ENCODE measurements at regions of chr18 and their contacts with region 1.

Region 1: GRCh38 chr18:2655178-2655953 is at the start of gene SMCHD1:
- DNase-seq: peak; percentile 67 to 96 (median 87)
- ATAC-seq: peak; percentile 70
- H3K4me3 ChIP-seq: peak within 1 kb of the TSS; percentile 96 to 97
- H3K4me3 Mint-ChIP-seq: peak within 1 kb of the TSS; percentile 88
- H3K27ac ChIP-seq: peak within 1 kb of the TSS; percentile 97 to 100
- H3K27ac Mint-ChIP-seq: peak within 1 kb of the TSS; percentile 98
- H3K4me1 ChIP-seq: peaks cover 29% of the 10 kb centered on the region
- H3K4me1 Mint-ChIP-seq: peaks cover 48% of the 10 kb centered on the region
- H3K27me3 ChIP-seq: no peaks in the 10 kb centered on the region
- H3K27me3 Mint-ChIP-seq: no peaks in the 10 kb centered on the region
- CTCF ChIP-seq: no peak
- total RNA-seq, gene SMCHD1: 305 to 306 TPM

Region 2: DNA sequence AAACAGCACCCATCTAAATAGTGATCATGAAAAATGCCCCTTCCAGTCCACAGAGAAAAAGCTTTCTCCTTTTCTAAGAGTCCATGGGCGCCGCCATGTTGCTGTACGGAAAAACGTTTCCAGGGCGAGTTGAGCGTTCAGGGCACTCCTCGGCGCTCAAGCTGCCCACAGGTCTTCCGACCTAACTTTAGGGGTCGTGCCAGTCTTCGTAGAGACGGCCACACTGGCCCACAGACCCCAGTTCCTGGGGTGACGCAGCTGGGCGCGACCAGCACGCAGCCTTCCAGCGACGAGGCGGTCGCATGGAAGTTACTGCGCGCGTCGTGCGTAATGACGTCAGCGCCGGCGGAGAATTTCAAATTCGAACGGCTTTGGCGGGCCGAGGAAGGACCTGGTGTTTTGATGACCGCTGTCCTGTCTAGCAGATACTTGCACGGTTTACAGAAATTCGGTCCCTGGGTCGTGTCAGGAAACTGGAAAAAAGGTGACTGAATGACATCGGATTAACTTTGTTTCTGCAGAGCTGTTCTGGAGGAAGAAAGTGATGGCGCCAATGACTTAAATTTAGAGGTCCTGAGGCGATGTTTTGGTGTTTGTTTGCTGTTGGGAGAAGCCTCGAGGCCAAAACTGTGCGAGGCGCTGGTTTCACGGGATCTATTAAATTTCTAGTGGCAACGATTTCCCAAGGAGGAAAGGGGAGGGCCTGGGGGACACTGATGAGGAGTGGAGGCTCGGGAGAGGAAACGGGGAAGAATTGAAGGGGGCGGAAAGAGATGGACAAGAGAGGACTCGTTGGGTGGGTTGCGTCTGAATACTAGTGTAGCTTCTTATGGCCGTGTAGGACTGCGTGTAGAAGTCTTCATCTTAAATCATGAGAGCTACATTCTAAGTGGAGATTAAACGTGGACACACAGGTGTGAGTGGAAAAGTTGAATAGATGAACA is 83.9 kb before region 1 on chr18 and contains the starts of genes METTL4 and NDC80:
- CTCF ChIA-PET with region 1: interaction called, 5 read pairs
- POLR2A ChIA-PET with region 1: interaction called, 53 read pairs
- intact Hi-C with region 1: loop called (anchors 1 kb)
- DNase-seq: peak; percentile 71 to 93 (median 85)
- ATAC-seq: peak; percentile 84
- H3K4me3 ChIP-seq: peak within 1 kb of the TSS; percentile 77 to 89
- H3K4me3 Mint-ChIP-seq: peak within 1 kb of the TSS; percentile 99
- H3K27ac ChIP-seq: peak within 1 kb of the TSS; percentile 97 to 99
- H3K27ac Mint-ChIP-seq: peak within 1 kb of the TSS; percentile 100
- H3K4me1 ChIP-seq: peaks cover 27% of the 10 kb centered on the region
- H3K4me1 Mint-ChIP-seq: peaks cover 65% of the 10 kb centered on the region
- H3K27me3 ChIP-seq: no peaks in the 10 kb centered on the region
- H3K27me3 Mint-ChIP-seq: no peaks in the 10 kb centered on the region
- CTCF ChIP-seq: no peak
- total RNA-seq, gene METTL4: 4.8 to 5.4 TPM
- total RNA-seq, gene NDC80: 5.6 to 7.1 TPM

Region 3: DNA sequence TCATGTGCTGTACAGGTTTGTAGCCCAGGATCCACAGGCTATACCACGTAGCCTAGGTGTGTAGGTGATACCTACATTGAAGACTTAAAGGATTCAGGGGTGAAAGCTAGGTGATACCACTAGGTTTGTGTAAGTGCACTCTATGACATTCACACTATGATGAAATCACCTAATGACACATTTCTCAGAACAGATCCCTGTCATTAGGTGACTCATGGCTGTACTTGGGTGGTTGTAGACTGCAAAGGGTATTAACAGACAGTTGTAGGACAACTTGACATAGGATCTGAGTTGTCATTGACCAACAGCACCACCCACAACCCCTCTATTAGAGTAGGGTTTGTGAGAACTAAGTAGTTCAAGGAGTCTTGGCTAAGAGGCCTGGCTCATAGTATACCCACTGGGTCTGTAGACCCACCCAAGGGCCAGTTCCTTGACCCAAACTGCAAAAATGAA is 27.5 kb before region 1 on chr18:
- CTCF ChIA-PET with region 1: no interaction called
- POLR2A ChIA-PET with region 1: interaction called, 14 read pairs
- intact Hi-C with region 1: no loop called
- DNase-seq: no peak
- ATAC-seq: no peak
- H3K4me3 ChIP-seq: no peak overlapping the region
- H3K4me3 Mint-ChIP-seq: no peak overlapping the region
- H3K27ac ChIP-seq: no peak overlapping the region
- H3K27ac Mint-ChIP-seq: no peak overlapping the region
- H3K4me1 ChIP-seq: no peaks in the 10 kb centered on the region
- H3K4me1 Mint-ChIP-seq: peaks cover 22% of the 10 kb centered on the region
- H3K27me3 ChIP-seq: no peaks in the 10 kb centered on the region
- H3K27me3 Mint-ChIP-seq: no peaks in the 10 kb centered on the region
- CTCF ChIP-seq: no peak

Region 4: DNA sequence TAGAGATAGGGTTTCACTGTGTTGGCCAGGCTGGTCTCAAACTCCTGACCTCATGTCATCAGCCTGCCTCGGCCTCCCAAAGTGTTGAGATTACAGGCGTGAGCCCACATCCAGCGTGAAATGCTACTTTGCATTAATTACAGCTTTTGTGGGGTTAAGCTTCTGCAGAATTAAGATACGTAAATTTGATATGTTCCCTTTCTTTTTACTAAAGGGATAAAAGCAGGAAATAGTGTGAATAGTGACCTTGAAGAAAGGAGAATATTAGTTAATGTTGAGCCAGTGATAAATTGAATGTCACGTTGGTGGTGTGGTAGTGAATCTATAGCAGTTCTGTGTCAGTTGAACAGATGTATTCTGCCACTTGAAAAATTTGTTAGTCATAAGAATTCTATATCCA is 17.0 kb after region 1 on chr18:
- CTCF ChIA-PET with region 1: interaction called, 3 read pairs
- POLR2A ChIA-PET with region 1: interaction called, 14 read pairs
- intact Hi-C with region 1: loop called in 1 of 2 experiments (anchors 2 kb)
- DNase-seq: no peak
- ATAC-seq: no peak
- H3K4me3 ChIP-seq: no peak overlapping the region
- H3K4me3 Mint-ChIP-seq: no peak overlapping the region
- H3K27ac ChIP-seq: no peak overlapping the region
- H3K27ac Mint-ChIP-seq: no peak overlapping the region
- H3K4me1 ChIP-seq: peaks cover 6% of the 10 kb centered on the region
- H3K4me1 Mint-ChIP-seq: peaks cover 69% of the 10 kb centered on the region
- H3K27me3 ChIP-seq: no peaks in the 10 kb centered on the region
- H3K27me3 Mint-ChIP-seq: no peaks in the 10 kb centered on the region
- CTCF ChIP-seq: no peak

Region 5: GRCh38 chr18:2692508-2692907 is 37.1 kb after region 1 on chr18:
- CTCF ChIA-PET with region 1: no interaction called
- POLR2A ChIA-PET with region 1: interaction called, 12 read pairs
- intact Hi-C with region 1: loop called in 1 of 2 experiments (anchors 5 kb)
- DNase-seq: no peak
- ATAC-seq: no peak
- H3K4me3 ChIP-seq: no peak overlapping the region
- H3K4me3 Mint-ChIP-seq: no peak overlapping the region
- H3K27ac ChIP-seq: no peak overlapping the region
- H3K27ac Mint-ChIP-seq: peak overlapping the region; percentile 20
- H3K4me1 ChIP-seq: peaks cover 14% of the 10 kb centered on the region
- H3K4me1 Mint-ChIP-seq: peaks cover 46% of the 10 kb centered on the region
- H3K27me3 ChIP-seq: no peaks in the 10 kb centered on the region
- H3K27me3 Mint-ChIP-seq: no peaks in the 10 kb centered on the region
- CTCF ChIP-seq: no peak

Region 6: DNA sequence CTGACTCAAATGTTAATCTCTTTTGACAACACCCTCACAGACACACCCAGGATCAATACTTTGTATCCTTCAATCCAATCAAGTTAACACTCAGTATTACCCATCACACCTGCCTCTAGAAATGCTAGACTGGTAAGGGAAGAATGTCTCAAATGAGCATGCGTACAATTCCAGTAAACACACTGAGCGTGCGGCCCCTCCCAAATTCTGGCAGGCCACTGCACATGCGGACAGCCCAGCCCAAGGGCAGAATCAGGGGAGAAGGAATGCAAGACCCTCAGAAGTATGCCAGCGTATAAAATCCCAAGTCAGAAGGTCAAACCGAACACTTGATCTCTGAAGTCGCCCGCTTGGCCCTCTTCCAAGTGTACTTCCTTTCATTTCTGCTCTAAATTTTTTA is 183.8 kb after region 1 on chr18:
- CTCF ChIA-PET with region 1: no interaction called
- POLR2A ChIA-PET with region 1: no interaction called
- intact Hi-C with region 1: no loop called
- DNase-seq: no peak
- ATAC-seq: no peak
- H3K4me3 ChIP-seq: no peak overlapping the region
- H3K4me3 Mint-ChIP-seq: no peak overlapping the region
- H3K27ac ChIP-seq: no peak overlapping the region
- H3K27ac Mint-ChIP-seq: no peak overlapping the region
- H3K4me1 ChIP-seq: no peaks in the 10 kb centered on the region
- H3K4me1 Mint-ChIP-seq: no peaks in the 10 kb centered on the region
- H3K27me3 ChIP-seq: no peaks in the 10 kb centered on the region
- H3K27me3 Mint-ChIP-seq: no peaks in the 10 kb centered on the region
- CTCF ChIP-seq: no peak

Region 7: GRCh38 chr18:3447895-3448837 is 792.8 kb after region 1 on chr18:
- CTCF ChIA-PET with region 1: no interaction called
- POLR2A ChIA-PET with region 1: interaction called, 4 read pairs
- intact Hi-C with region 1: loop called (anchors 5 kb)
- DNase-seq: peak; percentile 65 to 94 (median 86)
- ATAC-seq: peak; percentile 41
- H3K4me3 ChIP-seq: peak overlapping the region; percentile 66 to 95
- H3K4me3 Mint-ChIP-seq: peak overlapping the region; percentile 90
- H3K27ac ChIP-seq: peak overlapping the region; percentile 95 to 100
- H3K27ac Mint-ChIP-seq: peak overlapping the region; percentile 99
- H3K4me1 ChIP-seq: peaks cover 15% of the 10 kb centered on the region
- H3K4me1 Mint-ChIP-seq: peaks cover 39% of the 10 kb centered on the region
- H3K27me3 ChIP-seq: no peaks in the 10 kb centered on the region
- H3K27me3 Mint-ChIP-seq: no peaks in the 10 kb centered on the region
- CTCF ChIP-seq: no peak

Measured in CD8-positive, alpha-beta T cell (primary cell).